IMR-90 (cell line): ENCODE measurements at regions of chr12 and their contacts with region 1.

Region 1: DNA sequence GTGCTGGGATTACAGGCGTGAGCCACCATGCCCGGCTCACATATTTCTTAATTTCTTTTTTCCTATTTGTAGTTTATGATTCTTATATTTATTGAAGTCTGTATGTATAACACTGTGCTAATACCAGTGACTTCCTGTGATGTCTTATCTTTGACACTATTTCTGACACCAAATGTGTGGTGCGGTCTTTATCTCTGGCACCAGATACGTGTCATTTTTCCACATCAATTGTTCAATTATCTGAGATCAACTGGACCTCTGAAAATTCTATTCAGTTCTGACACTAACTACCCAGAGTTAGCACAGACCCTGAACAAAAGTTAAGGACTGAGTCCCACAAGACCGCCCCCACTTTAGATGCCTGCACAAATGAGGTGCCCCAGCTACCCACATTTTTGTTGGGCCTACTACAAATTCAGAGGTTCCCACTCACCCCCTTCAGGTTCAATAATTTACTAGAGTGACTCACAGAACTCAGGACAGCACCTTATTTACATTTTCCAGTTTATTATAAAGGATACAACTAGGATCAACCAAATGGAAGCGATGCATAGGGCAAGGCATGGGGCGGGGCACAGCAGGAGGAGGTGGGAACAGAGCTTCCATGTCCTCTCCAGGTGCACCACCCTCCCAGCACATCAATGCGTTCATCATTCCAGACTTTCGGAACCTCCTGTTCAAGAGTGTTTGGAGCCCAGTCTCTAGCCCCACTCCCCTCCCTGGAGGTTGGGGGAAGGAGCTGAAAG is 11.6 kb upstream of the SRSF9 start:
- DNase-seq: no peak
- ATAC-seq: no peak
- H3K4me3 ChIP-seq: no peak overlapping the region
- H3K27ac ChIP-seq: no peak overlapping the region
- H3K4me1 ChIP-seq: no peaks in the 10 kb centered on the region; the same call in 1 of the 2 replicates
- H3K27me3 ChIP-seq: no peaks in the 10 kb centered on the region
- CTCF ChIP-seq: no peak
- POLR2A ChIP-seq: no peak
- RAD21 ChIP-seq: no peak

Region 2: DNA sequence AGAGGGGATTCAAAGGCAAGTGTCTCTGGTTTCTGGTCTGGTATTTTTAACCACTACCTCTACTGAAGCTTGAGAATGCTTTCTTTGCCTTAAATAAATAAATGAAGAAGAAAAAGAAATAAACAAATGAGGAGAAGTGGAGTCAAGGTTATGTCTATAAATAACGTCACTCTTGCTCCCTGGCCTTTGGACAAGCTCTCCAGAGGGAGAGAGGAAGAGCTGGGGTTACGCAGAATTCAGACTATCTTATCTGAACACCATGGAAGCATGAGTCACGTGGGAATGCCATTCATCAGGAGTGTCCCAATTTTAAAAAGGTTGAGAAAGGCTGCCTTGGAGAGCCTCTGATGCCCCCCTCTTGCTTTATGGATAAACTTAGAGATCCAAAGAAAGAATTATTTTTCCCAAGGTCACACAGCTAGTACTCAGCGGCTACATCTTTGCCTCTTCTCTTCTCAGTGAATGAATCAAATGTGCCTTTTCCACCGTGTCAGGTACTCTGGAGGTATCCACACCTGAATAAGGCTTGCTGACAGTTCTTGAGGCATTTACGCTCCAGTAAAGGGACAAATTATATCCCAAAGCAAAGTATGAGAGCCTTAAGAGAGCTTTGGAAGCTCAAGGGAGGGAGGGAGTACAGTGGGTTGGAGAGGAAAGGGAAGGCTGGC is 99.3 kb before region 1 on chr12:
- CTCF ChIA-PET with region 1: no interaction called
- POLR2A ChIA-PET with region 1: interaction called, 25 read pairs
- dilution Hi-C with region 1: no loop called
- in situ Hi-C with region 1: no loop called
- intact Hi-C with region 1: no loop called
- DNase-seq: peak; percentile 77
- ATAC-seq: peak; percentile 93
- H3K4me3 ChIP-seq: no peak overlapping the region
- H3K27ac ChIP-seq: no peak overlapping the region
- H3K4me1 ChIP-seq: peaks cover 6% of the 10 kb centered on the region
- H3K27me3 ChIP-seq: peaks cover 26% of the 10 kb centered on the region
- CTCF ChIP-seq: no peak
- POLR2A ChIP-seq: no peak
- RAD21 ChIP-seq: no peak